Activated naive CD4-positive, alpha-beta T cell treated with anti-CD3 and anti-CD28 coated beads for 36 hours (primary cell): ENCODE measurements at regions of chr21 and their contacts with region 1.

Region 1: GRCh38 chr21:32562426-32562825 is 22.9 kb downstream of the TCP10L start:
- DNase-seq: peak; percentile 30
- H3K4me3 Mint-ChIP-seq: no peak overlapping the region
- H3K27ac Mint-ChIP-seq: no peak overlapping the region
- H3K4me1 Mint-ChIP-seq: no peaks in the 10 kb centered on the region
- H3K27me3 Mint-ChIP-seq: no peaks in the 10 kb centered on the region

Region 2: DNA sequence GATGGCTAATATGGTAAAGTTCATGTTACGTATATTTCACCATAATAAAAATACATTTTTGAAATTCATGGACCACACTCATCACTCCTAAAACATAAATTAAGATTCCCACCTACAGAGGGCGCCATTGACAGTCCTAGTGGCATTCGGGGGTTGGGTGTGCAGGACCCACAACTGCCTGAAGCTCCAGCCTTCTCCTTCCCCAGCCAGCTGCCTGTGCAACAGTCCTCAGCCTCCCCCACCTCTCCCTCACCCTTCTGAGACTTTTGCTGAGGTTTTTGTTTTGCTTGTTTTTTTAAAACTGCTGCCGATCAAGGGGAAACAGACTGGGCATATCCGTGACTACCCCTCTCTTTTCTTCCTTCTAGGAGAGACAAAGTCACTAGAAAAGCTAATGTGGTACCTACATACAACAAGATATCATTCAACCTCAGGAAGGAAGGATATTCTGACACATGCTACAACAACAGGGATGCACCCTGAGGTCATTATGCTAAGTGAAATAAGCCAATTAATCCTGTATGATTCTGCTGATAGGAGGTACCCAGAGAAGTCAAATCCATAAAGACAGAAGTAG is 159.1 kb before region 1 on chr21:
- CTCF ChIA-PET with region 1: interaction called, 31 read pairs
- intact Hi-C with region 1: loop called (anchors 1 kb)
- DNase-seq: peak; percentile 68
- H3K4me3 Mint-ChIP-seq: no peak overlapping the region
- H3K27ac Mint-ChIP-seq: no peak overlapping the region
- H3K4me1 Mint-ChIP-seq: no peaks in the 10 kb centered on the region
- H3K27me3 Mint-ChIP-seq: no peaks in the 10 kb centered on the region